ENCODE measurements at regions of chr22 and their contacts with region 1.

Region 1: GRCh38 chr22:22787786-22788459 is 99.7 kb upstream of the IGLL5 start:
- DNase-seq: peak; percentile 82
- H3K4me3 ChIP-seq: no peak overlapping the region
- H3K27ac ChIP-seq: no peak overlapping the region
- H3K4me1 ChIP-seq: no peaks in the 10 kb centered on the region
- CTCF ChIP-seq: peak; percentile 98

Region 2: GRCh38 chr22:22605074-22605404 is 182.9 kb before region 1 on chr22:
- CTCF ChIA-PET with region 1: no interaction called
- POLR2A ChIA-PET with region 1: no interaction called
- intact Hi-C with region 1: no loop called
- DNase-seq: peak; percentile 40
- H3K4me3 ChIP-seq: peak overlapping the region; percentile 25
- H3K27ac ChIP-seq: peak overlapping the region; percentile 63
- H3K4me1 ChIP-seq: peaks cover 29% of the 10 kb centered on the region
- CTCF ChIP-seq: no peak

Region 3: DNA sequence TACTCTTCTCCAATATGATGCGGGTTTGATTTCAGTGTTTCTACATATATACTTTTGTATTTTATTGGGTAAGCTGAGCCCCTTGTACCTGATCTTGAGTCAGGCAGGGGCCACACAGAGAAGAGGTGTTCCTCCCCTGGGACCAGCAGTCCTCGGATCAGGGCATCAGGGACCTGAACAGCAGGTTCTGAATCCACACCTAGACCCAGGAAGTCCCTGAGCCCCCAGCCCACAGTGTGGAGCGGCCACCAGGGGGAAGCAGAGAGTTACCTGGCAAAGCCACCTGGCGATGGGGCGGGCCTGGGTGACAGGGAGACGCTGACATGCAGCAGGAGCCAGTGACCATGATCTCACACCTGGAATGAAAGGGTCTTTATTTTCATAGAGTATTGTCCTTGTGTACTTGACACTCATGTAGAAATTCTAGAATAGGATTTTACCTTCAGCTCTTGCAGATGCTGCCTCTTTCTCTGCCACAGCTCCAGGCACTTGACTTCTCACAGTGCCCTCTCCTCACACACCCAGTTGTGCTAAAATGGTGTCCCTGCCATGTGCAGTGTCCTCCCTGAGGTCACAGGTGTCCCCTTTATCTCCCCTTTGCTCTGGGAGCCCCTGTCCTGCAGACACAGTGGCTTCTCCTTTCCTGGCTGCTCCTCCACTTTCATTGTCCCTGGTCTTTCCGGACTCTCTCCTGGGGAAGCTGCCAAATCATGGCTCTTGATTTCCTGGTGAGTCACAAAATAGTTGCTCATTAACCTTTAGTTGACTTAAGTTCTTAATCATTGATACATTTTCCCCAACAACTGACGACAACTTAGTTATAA is 95.0 kb before region 1 on chr22:
- CTCF ChIA-PET with region 1: no interaction called
- POLR2A ChIA-PET with region 1: no interaction called
- intact Hi-C with region 1: no loop called
- DNase-seq: peak; percentile 83
- H3K4me3 ChIP-seq: peak overlapping the region; percentile 46
- H3K27ac ChIP-seq: peak overlapping the region; percentile 87
- H3K4me1 ChIP-seq: peaks cover 68% of the 10 kb centered on the region
- CTCF ChIP-seq: peak; percentile 99

Region 4: GRCh38 chr22:22848364-22848866 is 60.5 kb after region 1 on chr22:
- CTCF ChIA-PET with region 1: no interaction called
- POLR2A ChIA-PET with region 1: no interaction called
- intact Hi-C with region 1: loop called (anchors 10 kb)
- DNase-seq: peak; percentile 79
- H3K4me3 ChIP-seq: no peak overlapping the region
- H3K27ac ChIP-seq: no peak overlapping the region
- H3K4me1 ChIP-seq: peaks cover 34% of the 10 kb centered on the region
- CTCF ChIP-seq: peak; percentile 99

Region 5: GRCh38 chr22:22877523-22878210 is 89.7 kb after region 1 on chr22:
- CTCF ChIA-PET with region 1: no interaction called
- POLR2A ChIA-PET with region 1: interaction called, 3 read pairs
- intact Hi-C with region 1: loop called (anchors 1 kb)
- DNase-seq: peak; percentile 75
- H3K4me3 ChIP-seq: no peak overlapping the region
- H3K27ac ChIP-seq: no peak overlapping the region
- H3K4me1 ChIP-seq: peaks cover 53% of the 10 kb centered on the region
- CTCF ChIP-seq: peak; percentile 84